ENCODE measurements at regions of chr1 and their contacts with region 1.

Region 1: DNA sequence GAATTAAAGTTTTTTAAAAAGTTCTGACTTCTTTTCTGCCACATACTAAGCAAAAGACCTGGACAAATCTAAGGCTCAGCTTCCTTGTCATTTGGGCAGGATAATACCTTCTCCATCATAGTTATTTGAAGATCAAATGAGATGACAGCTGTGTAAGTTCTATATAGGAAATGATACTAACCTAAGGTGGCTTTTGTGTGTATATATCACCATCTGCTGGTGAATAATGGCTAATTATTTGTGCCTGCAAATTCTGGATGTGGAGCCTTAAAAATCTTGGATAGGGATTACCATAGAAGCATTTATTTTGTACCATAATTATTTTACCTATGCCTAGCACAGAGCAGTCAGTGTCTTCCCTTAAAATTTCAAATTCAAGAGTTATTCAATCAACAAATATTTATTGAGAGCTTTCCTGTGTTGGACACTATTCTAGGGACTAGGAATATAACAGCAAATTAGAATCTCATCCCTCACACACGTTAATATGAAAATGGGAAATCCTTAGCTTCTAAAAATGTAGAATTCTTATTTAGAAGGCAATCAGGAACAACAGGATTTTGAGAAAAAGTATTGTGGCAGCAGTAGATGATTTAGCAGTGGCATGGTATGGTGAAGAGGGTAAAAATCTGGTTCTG is 89.8 kb downstream of the TMEM200B start:
- DNase-seq: peak; percentile 11
- ATAC-seq: peak; percentile 61; the same call in 2 of the 3 replicates
- H3K4me3 ChIP-seq: no peak overlapping the region
- H3K27ac ChIP-seq: no peak overlapping the region
- H3K4me1 ChIP-seq: no peaks in the 10 kb centered on the region
- H3K27me3 ChIP-seq: no peaks in the 10 kb centered on the region
- CTCF ChIP-seq: peak; percentile 44 to 74 (median 52); a peak in 4 of 6 replicates
- EP300 ChIP-seq: no peak
- POLR2A ChIP-seq: no peak
- RAD21 ChIP-seq: peak; percentile 93

Region 2: DNA sequence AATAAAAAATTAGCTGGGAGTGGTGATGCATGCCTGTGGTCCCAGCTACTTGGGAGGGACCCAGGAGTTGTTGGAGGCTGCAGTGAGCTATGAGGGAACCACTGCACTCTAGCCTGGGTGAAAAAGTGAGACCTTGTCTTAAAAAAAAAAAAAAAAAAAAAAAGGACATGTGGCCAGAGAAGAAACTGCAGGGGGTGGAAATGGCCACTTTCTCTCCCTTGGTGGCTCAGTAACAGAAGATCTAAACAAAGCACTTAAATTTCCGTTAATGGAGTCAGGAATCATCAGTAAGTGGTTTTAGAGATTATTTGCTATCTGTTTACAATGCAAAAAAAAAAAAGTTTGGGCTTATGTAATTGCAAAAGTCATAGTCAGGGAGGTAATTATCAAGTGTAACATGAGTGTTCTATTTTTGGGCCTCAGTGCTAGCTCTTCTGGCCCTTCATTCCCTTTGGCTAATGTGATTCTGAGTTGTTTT is 241.3 kb before region 1 on chr1:
- CTCF ChIA-PET with region 1: interaction called, 4 read pairs
- POLR2A ChIA-PET with region 1: interaction called, 6 read pairs
- RAD21 ChIA-PET with region 1: interaction called, 3 read pairs
- SMC1A ChIA-PET with region 1: no interaction called
- in situ Hi-C with region 1: loop called (anchors 5 kb)
- intact Hi-C with region 1: loop called (anchors 5 kb)
- DNase-seq: no peak
- ATAC-seq: peak; percentile 38; the same call in 2 of the 3 replicates
- H3K4me3 ChIP-seq: no peak overlapping the region
- H3K27ac ChIP-seq: no peak overlapping the region
- H3K4me1 ChIP-seq: no peaks in the 10 kb centered on the region
- H3K27me3 ChIP-seq: no peaks in the 10 kb centered on the region; a peak in 1 of 4 replicates
- CTCF ChIP-seq: peak in 1 of 3 experiments; percentile 23; a peak in 2 of 6 replicates
- EP300 ChIP-seq: no peak
- POLR2A ChIP-seq: no peak
- RAD21 ChIP-seq: no peak

Region 3: DNA sequence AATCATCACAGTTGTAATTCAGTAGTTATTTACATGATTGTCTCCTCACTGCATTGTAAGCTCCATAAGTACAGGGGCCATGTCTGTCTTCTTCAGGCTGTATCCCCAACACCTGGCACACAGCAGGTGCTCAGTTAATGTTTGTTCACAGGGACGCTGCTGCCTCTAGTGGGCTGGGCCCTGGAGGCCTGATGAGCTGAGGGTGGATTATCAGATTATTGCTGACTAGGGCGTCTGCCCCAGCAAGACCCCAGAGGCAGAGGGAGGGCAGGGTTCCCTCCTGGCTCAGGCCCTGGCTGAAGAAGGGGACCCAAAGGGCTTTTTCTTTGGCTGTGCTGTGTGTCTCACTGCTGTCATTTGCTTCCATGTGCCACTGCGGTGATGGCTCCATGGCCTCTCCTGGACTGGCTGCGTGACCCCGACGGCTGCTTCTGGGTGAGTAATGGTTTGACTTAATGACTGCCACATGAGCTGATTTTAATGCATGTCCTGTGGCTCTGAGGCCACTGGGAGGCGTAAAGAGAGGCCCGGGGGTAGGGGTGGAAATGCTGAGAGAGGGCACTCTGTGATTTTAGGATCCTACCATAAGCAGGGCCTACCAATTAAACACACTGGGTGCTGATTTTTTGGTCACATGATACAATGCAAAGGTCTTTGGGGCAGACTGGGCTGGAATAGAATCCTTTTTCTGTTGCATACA is 140.4 kb before region 1 on chr1:
- CTCF ChIA-PET with region 1: interaction called, 63 read pairs
- POLR2A ChIA-PET with region 1: interaction called, 6 read pairs
- RAD21 ChIA-PET with region 1: interaction called, 284 read pairs
- SMC1A ChIA-PET with region 1: interaction called, 15 read pairs
- in situ Hi-C with region 1: no loop called
- intact Hi-C with region 1: no loop called
- DNase-seq: no peak
- ATAC-seq: peak; percentile 63
- H3K4me3 ChIP-seq: no peak overlapping the region
- H3K27ac ChIP-seq: no peak overlapping the region
- H3K4me1 ChIP-seq: no peaks in the 10 kb centered on the region
- H3K27me3 ChIP-seq: no peaks in the 10 kb centered on the region
- CTCF ChIP-seq: peak; percentile 27 to 39 (median 38); a peak in 5 of 6 replicates
- EP300 ChIP-seq: no peak
- POLR2A ChIP-seq: no peak
- RAD21 ChIP-seq: peak; percentile 59

Region 4: DNA sequence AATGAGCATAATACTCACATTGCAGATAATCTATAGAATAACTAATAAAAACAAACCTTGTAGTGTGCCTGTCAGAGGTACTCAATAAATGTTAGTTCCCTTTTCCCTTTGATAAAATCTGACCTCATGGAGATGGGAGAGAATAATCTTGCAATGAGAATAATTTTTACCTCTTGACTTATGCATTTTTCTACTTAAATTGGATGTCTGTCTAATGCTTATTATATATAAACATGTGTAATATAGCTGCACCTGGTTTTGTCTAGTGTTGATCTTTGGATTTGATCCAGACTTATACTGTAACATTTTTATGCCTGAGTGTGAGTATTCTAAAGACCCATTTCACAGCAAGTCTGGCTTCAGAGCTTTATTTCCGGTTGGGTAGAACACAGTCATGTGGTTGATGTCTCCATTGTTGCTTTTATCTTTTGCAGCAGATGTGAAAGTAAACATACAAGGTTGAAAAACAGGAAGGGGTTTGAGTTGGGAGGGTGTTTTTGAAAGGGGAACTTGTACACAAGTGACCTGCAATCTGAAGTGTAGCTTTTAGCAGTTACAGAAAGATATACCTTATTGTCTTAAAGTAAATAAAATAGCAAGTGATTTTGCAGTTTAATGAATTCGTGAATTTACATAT is 107.2 kb before region 1 on chr1:
- CTCF ChIA-PET with region 1: interaction called, 3 read pairs
- POLR2A ChIA-PET with region 1: interaction called, 3 read pairs
- RAD21 ChIA-PET with region 1: interaction called, 3 read pairs
- SMC1A ChIA-PET with region 1: interaction called, 11 read pairs
- in situ Hi-C with region 1: no loop called
- intact Hi-C with region 1: no loop called
- DNase-seq: peak; percentile 91
- ATAC-seq: peak; percentile 96
- H3K4me3 ChIP-seq: peak overlapping the region; percentile 33
- H3K27ac ChIP-seq: peak overlapping the region; percentile 72
- H3K4me1 ChIP-seq: peaks cover 24% of the 10 kb centered on the region
- H3K27me3 ChIP-seq: no peaks in the 10 kb centered on the region
- CTCF ChIP-seq: no peak
- EP300 ChIP-seq: peak in 1 of 2 experiments; percentile 57; a peak in 1 of 4 replicates
- POLR2A ChIP-seq: no peak
- RAD21 ChIP-seq: no peak

Region 5: GRCh38 chr1:29181413-29182225 is 147.7 kb after region 1 on chr1 and contains the start of gene SRSF4:
- CTCF ChIA-PET with region 1: interaction called, 13 read pairs
- POLR2A ChIA-PET with region 1: no interaction called
- RAD21 ChIA-PET with region 1: interaction called, 15 read pairs
- SMC1A ChIA-PET with region 1: interaction called, 3 read pairs
- in situ Hi-C with region 1: no loop called
- intact Hi-C with region 1: no loop called
- DNase-seq: peak; percentile 94
- ATAC-seq: peak; percentile 93
- H3K4me3 ChIP-seq: peak within 1 kb of the TSS; percentile 97
- H3K27ac ChIP-seq: peak within 1 kb of the TSS; percentile 99
- H3K4me1 ChIP-seq: no peaks in the 10 kb centered on the region; the same call in none of the 2 replicates
- H3K27me3 ChIP-seq: no peaks in the 10 kb centered on the region
- CTCF ChIP-seq: peak; percentile 55 to 95 (median 63); a peak in 4 of 6 replicates
- EP300 ChIP-seq: no peak
- POLR2A ChIP-seq: peak; percentile 85
- RAD21 ChIP-seq: no peak
- polyA plus RNA-seq, gene SRSF4: 17.2 to 26.4 TPM

Region 6: DNA sequence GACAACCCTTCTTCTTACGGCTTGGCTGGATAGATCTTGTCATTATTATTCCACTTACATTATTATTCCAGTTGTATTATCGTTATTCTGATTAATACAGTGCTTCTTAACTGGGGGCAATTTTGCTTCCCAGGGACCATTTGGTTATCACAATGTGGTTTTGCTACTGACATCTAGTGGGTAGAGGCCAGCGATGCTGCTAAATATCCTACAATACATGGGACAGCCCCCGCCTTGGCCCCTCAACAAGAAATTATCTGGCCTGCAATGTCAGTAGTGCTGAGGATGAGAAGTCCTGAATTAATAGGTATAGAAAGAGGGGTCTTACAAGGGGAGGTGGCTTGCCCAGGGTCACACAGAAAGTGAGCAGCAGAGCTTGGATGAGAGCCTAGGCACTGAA is 308.0 kb after region 1 on chr1:
- CTCF ChIA-PET with region 1: no interaction called
- POLR2A ChIA-PET with region 1: no interaction called
- RAD21 ChIA-PET with region 1: no interaction called
- SMC1A ChIA-PET with region 1: no interaction called
- in situ Hi-C with region 1: no loop called
- intact Hi-C with region 1: no loop called
- DNase-seq: no peak
- ATAC-seq: no peak
- H3K4me3 ChIP-seq: no peak overlapping the region
- H3K27ac ChIP-seq: no peak overlapping the region
- H3K4me1 ChIP-seq: no peaks in the 10 kb centered on the region
- H3K27me3 ChIP-seq: no peaks in the 10 kb centered on the region; a peak in 3 of 4 replicates
- CTCF ChIP-seq: peak in 1 of 3 experiments; percentile 11; a peak in 1 of 6 replicates
- EP300 ChIP-seq: no peak
- POLR2A ChIP-seq: no peak
- RAD21 ChIP-seq: no peak

Region 7: GRCh38 chr1:29649189-29650040 is 615.5 kb after region 1 on chr1:
- CTCF ChIA-PET with region 1: no interaction called
- POLR2A ChIA-PET with region 1: no interaction called
- RAD21 ChIA-PET with region 1: no interaction called
- SMC1A ChIA-PET with region 1: no interaction called
- in situ Hi-C with region 1: no loop called
- intact Hi-C with region 1: no loop called
- DNase-seq: no peak
- ATAC-seq: no peak
- H3K4me3 ChIP-seq: no peak overlapping the region
- H3K27ac ChIP-seq: no peak overlapping the region
- H3K4me1 ChIP-seq: no peaks in the 10 kb centered on the region
- H3K27me3 ChIP-seq: no peaks in the 10 kb centered on the region
- CTCF ChIP-seq: no peak
- EP300 ChIP-seq: no peak
- POLR2A ChIP-seq: no peak
- RAD21 ChIP-seq: no peak